OCI-LY7 (cell line): ENCODE measurements at regions of chr11 and their contacts with region 1.

Region 1: DNA sequence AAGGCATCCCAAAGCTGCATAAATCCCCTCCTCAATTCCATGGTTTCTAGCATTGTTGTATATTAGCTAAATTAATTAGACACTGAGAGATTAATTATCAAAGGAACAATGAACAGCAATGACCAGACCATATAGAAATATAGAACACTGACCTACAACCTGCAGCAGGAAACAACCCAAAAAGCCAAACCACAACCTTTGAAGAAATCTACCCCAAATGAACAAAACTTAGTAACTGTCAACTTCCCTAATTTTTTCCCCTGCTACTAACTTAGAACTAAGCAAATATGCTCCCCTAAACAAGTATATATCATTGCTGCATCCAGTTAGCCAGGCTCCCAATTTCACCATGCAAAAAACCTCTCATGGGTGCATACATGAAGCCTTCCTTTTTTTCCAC is 268.0 kb upstream of the ANO3 start:
- DNase-seq: peak; percentile 29
- H3K4me3 ChIP-seq: no peak overlapping the region
- H3K27ac ChIP-seq: no peak overlapping the region
- H3K4me1 ChIP-seq: peaks cover 37% of the 10 kb centered on the region
- CTCF ChIP-seq: no peak

Region 2: DNA sequence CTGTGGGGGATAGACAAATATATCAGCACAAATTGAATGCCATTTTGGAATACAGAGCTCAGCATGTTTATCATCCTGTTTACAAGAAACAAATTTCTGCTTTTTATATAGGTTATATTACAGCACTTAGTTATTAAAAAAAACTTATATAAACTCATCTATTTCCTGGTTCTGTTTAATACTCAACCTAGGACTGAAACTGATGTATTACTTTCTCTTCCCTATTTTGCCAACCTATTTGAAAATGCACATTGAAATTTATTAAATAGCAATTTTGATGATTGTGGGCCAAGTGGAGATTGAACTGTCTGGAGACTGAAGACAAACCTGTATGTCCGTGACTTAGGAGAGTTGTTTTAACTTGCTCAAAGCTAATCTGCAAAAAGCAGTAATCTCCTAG is 20.2 kb before region 1 on chr11:
- CTCF ChIA-PET with region 1: no interaction called
- POLR2A ChIA-PET with region 1: interaction called, 10 read pairs
- intact Hi-C with region 1: no loop called
- DNase-seq: peak; percentile 5
- H3K4me3 ChIP-seq: no peak overlapping the region
- H3K27ac ChIP-seq: no peak overlapping the region
- H3K4me1 ChIP-seq: peaks cover 10% of the 10 kb centered on the region
- CTCF ChIP-seq: no peak

Region 3: GRCh38 chr11:26078217-26078821 is 14.4 kb after region 1 on chr11:
- CTCF ChIA-PET with region 1: no interaction called
- POLR2A ChIA-PET with region 1: interaction called, 66 read pairs
- intact Hi-C with region 1: no loop called
- DNase-seq: no peak
- H3K4me3 ChIP-seq: no peak overlapping the region
- H3K27ac ChIP-seq: peak overlapping the region; percentile 26
- H3K4me1 ChIP-seq: peaks cover 14% of the 10 kb centered on the region
- CTCF ChIP-seq: no peak